ENCODE measurements at regions of chr19 and their contacts with region 1.

Region 1: GRCh38 chr19:47725759-47726401 is 12.7 kb downstream of the EHD2 start:
- DNase-seq: no peak
- H3K4me3 ChIP-seq: no peak overlapping the region
- H3K27ac ChIP-seq: peak overlapping the region in 1 of 2 experiments; percentile 18; a peak in 1 of 4 replicates
- H3K4me1 ChIP-seq: peaks cover 12 to 18% of the 10 kb centered on the region in 2 experiments; a peak in 2 of 4 replicates
- H3K27me3 ChIP-seq: no peaks in the 10 kb centered on the region
- CTCF ChIP-seq: no peak
- EP300 ChIP-seq: no peak
- RAD21 ChIP-seq: no peak

Region 2: DNA sequence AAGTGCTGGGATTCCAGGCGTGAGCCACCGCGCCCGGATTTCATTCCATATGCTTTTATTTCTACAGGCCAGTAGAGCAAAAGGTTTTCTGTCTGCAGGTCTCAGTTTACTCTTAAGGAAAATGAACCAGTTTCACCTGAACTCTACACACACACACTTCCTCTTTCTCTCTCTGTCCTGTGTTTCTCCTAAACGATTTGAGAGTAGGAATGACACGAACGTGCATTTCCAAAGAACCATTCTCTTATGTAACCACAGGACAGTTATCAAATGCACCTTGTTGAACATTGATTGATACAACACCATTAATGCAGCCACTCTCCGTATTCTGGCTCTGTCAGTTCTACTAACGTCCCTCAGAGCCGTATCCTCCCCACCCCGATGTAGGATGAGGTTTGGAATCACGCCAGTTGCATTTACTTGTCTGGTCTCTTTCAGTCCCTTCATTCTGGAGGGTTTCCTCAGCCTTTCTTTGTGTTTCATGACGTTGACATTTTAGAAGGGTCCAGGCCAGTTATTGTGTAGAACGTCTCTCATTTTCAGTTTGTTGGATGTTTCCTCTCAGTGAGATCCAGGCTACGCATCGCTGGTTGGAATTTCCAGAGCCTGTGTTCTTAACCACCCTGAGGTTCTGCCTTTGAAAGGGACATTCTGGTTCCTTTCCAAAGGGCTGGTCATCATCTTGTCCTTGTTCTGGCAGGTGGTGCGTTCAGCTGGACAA is 81.0 kb before region 1 on chr19:
- CTCF ChIA-PET with region 1: no interaction called
- POLR2A ChIA-PET with region 1: no interaction called
- DNase-seq: no peak
- H3K4me3 ChIP-seq: no peak overlapping the region
- H3K27ac ChIP-seq: peak overlapping the region in 1 of 2 experiments; percentile 4; a peak in 1 of 4 replicates
- H3K4me1 ChIP-seq: peaks cover 0 to 5% of the 10 kb centered on the region in 2 experiments; a peak in 1 of 4 replicates
- H3K27me3 ChIP-seq: no peaks in the 10 kb centered on the region
- CTCF ChIP-seq: no peak
- EP300 ChIP-seq: no peak
- RAD21 ChIP-seq: no peak

Region 3: GRCh38 chr19:47707135-47707925 is 18.6 kb before region 1 on chr19:
- CTCF ChIA-PET with region 1: interaction called, 27 read pairs
- POLR2A ChIA-PET with region 1: no interaction called
- DNase-seq: peak; percentile 84
- H3K4me3 ChIP-seq: no peak overlapping the region; a peak in 1 of 4 replicates
- H3K27ac ChIP-seq: no peak overlapping the region
- H3K4me1 ChIP-seq: no peaks in the 10 kb centered on the region
- H3K27me3 ChIP-seq: no peaks in the 10 kb centered on the region
- CTCF ChIP-seq: peak; percentile 75
- EP300 ChIP-seq: no peak
- RAD21 ChIP-seq: peak; percentile 78

Region 4: DNA sequence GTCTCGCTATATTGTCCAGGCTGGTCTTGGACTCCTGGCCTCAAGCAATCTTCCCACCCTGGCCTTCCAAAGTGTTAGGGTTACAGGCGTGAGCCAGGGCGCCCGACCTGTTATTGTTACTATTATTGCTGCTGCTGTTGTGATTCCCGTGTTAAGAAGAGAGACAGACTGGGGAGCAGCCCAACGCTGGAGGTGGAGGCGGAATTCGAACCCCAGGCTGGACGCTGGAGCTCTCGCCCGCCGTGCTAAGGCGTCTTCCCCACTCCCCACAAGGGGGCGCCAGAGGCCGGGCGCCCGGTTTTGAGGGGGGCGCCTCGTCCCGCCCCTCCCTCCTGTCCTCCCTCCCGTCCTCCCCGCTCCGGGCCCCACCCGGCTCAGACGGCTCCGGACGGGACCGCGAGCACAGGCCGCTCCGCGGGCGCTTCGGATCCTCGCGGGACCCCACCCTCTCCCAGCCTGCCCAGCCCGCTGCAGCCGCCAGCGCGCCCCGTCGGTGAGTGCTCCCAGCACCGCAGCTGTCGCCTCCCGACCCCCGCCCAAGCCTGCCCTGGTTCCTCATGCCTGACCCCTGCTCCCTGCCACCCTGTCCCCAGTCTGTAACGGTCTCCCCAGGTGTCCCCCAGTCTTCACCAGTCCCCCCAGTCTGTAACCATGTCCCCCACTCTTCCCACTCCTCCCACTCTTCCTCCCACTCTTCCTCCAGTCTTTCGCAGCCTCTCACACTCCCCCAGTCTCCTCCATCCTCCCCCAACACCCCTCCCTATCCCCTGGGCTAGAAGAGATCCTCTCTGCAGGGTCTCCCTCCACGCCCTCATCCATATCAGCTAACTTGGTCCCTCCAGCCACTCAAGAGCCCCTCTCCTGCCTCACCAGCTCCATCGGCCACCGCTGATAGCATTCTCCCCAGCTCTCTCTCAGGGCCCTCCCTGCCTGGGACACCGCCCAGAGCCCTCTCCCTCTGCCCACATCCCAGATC is 12.5 kb before region 1 on chr19 and contains the start of gene EHD2:
- CTCF ChIA-PET with region 1: interaction called, 27 read pairs
- POLR2A ChIA-PET with region 1: no interaction called
- DNase-seq: peak; percentile 88
- H3K4me3 ChIP-seq: peak within 1 kb of the TSS; percentile 58 to 79
- H3K27ac ChIP-seq: peak within 1 kb of the TSS; percentile 30 to 67; a peak in 2 of 4 replicates
- H3K4me1 ChIP-seq: peaks cover 3 to 4% of the 10 kb centered on the region in 2 experiments; a peak in 3 of 4 replicates
- H3K27me3 ChIP-seq: no peaks in the 10 kb centered on the region
- CTCF ChIP-seq: peak; percentile 89
- EP300 ChIP-seq: peak in 1 of 2 experiments; percentile 36; a peak in 1 of 4 replicates
- RAD21 ChIP-seq: peak; percentile 82
- polyA plus RNA-seq, gene EHD2: 26.3 and 55.5 TPM in 2 replicates

Region 5: DNA sequence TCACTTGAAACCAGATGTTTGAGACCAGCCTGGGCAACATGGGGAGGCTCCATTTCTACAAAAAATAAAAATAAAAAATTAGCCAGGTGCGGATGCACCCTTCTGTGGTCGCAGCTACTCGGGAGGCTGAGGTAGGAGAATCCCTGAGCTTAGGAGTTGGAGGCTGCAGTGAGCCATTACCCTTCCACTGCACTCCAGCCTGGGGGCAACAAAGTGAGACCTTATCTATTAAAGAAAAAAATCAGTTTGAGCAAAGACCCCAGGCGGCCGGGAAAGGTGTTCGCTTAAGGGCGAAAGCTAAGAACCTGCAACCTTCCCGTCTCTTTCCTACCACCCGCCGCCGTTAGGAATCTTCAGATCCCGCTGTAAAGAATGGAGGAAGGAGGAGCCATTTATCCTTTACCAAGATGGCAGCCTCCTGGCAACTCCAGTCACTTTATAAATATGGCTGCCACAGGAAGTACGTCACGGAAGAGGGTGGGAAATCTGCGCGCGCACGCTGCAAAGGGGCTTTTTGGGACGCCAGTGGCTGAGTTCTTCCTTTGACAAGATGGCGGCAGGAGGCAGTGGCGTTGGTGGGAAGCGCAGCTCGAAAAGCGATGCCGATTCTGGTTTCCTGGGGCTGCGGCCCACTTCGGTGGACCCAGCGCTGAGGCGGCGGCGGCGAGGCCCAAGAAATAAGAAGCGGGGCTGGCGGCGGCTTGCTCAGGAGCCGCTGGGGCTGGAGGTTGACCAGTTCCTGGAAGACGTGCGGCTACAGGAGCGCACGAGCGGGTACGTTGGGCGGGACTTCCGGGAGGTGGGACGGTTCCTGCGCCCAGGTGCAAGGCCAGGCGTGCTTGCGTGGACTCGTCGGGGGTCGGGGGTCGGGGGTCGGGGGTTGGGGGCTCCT is 19.4 kb after region 1 on chr19 and contains the start of gene NOP53:
- CTCF ChIA-PET with region 1: interaction called, 13 read pairs
- POLR2A ChIA-PET with region 1: interaction called, 5 read pairs
- DNase-seq: peak; percentile 96
- H3K4me3 ChIP-seq: peak within 1 kb of the TSS; percentile 65 to 83
- H3K27ac ChIP-seq: peak within 1 kb of the TSS; percentile 91 to 97
- H3K4me1 ChIP-seq: peaks cover 12 to 14% of the 10 kb centered on the region in 2 experiments; a peak in 1 of 4 replicates
- H3K27me3 ChIP-seq: no peaks in the 10 kb centered on the region
- CTCF ChIP-seq: no peak
- EP300 ChIP-seq: peak in 1 of 2 experiments; percentile 39; a peak in 1 of 4 replicates
- RAD21 ChIP-seq: no peak
- polyA plus RNA-seq, gene NOP53: 198 and 275 TPM in 2 replicates

Region 6: GRCh38 chr19:47765523-47766358 is 39.9 kb after region 1 on chr19:
- CTCF ChIA-PET with region 1: no interaction called
- POLR2A ChIA-PET with region 1: no interaction called
- DNase-seq: peak; percentile 77
- H3K4me3 ChIP-seq: no peak overlapping the region; a peak in 1 of 4 replicates
- H3K27ac ChIP-seq: no peak overlapping the region
- H3K4me1 ChIP-seq: no peaks in the 10 kb centered on the region; a peak in 1 of 4 replicates
- H3K27me3 ChIP-seq: no peaks in the 10 kb centered on the region
- CTCF ChIP-seq: peak; percentile 79
- EP300 ChIP-seq: no peak
- RAD21 ChIP-seq: peak; percentile 75